Naive thymus-derived CD4-positive, alpha-beta T cell (primary cell): ENCODE measurements at regions of chr1 and their contacts with region 1.

Region 1: GRCh38 chr1:84573967-84574842 is at the start of gene CTBS:
- DNase-seq: peak; percentile 69 to 84 (median 82)
- ATAC-seq: peak; percentile 96
- H3K4me3 ChIP-seq: peak within 1 kb of the TSS; percentile 77
- H3K4me3 Mint-ChIP-seq: peak within 1 kb of the TSS; percentile 97 to 99 (median 99)
- H3K27ac ChIP-seq: peak within 1 kb of the TSS; percentile 99
- H3K27ac Mint-ChIP-seq: peak within 1 kb of the TSS; percentile 98 to 100 (median 100)
- H3K4me1 ChIP-seq: peaks cover 9 to 13% of the 10 kb centered on the region in 2 donors
- H3K4me1 Mint-ChIP-seq: peaks cover 29 to 51% (median 40%) of the 10 kb centered on the region in 7 donors
- H3K27me3 ChIP-seq: no peaks in the 10 kb centered on the region
- H3K27me3 Mint-ChIP-seq: peaks cover 0 to 2% (median 0%) of the 10 kb centered on the region in 5 donors
- total RNA-seq, gene CTBS: 17.4 to 22.3 (median 19.0) TPM

Region 2: GRCh38 chr1:84077476-84078107 is 496.6 kb before region 1 on chr1:
- CTCF ChIA-PET with region 1: no interaction called
- POLR2A ChIA-PET with region 1: no interaction called
- intact Hi-C with region 1: loop called in 1 of 2 experiments (anchors 5 kb)
- DNase-seq: peak; percentile 64 to 79 (median 72)
- ATAC-seq: peak; percentile 97
- H3K4me3 ChIP-seq: peak overlapping the region; percentile 79
- H3K4me3 Mint-ChIP-seq: peak overlapping the region; percentile 84 to 93 (median 90)
- H3K27ac ChIP-seq: peak overlapping the region; percentile 66
- H3K27ac Mint-ChIP-seq: peak overlapping the region; percentile 23 to 87 (median 75)
- H3K4me1 ChIP-seq: peaks cover 9 to 10% of the 10 kb centered on the region in 2 donors
- H3K4me1 Mint-ChIP-seq: peaks cover 6 to 23% (median 14%) of the 10 kb centered on the region in 7 donors
- H3K27me3 ChIP-seq: no peaks in the 10 kb centered on the region
- H3K27me3 Mint-ChIP-seq: peaks cover 0 to 35% (median 0%) of the 10 kb centered on the region in 5 donors

Region 3: DNA sequence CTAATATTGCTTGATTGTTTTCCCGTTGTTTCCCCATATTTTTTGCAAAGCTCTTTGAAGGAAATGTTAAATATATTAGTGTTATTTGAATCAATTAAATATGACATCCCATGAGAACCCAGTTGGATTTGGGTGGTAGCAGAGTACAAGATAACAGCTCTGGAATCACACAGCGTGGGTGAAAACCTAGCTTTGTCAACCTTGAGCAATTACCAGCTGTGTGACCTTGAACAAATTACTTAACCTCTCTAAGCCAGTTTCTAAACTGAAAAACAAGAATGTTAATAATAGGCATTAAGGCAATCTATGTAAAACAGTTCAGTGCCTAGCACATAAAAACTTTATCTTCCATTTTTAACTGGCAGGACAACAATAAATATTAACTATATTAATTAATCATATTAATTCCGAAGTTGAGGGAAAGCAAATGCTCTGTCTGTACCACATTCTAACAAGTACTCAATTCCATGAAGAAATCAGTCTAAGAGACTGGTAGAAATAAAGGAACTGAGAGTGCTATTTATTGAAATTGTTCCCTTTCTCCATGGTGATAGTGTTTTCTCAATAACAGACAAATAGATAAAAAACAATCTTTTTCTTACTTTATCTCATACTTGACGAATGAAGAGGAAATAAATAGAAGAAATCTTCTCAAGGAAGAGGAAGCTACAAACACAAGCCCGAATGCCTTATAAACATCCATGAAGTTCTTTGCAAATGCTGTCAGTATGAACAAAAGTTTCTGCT is 148.9 kb before region 1 on chr1:
- CTCF ChIA-PET with region 1: no interaction called
- POLR2A ChIA-PET with region 1: no interaction called
- intact Hi-C with region 1: no loop called
- DNase-seq: no peak
- ATAC-seq: no peak
- H3K4me3 ChIP-seq: no peak overlapping the region
- H3K4me3 Mint-ChIP-seq: no peak overlapping the region
- H3K27ac ChIP-seq: no peak overlapping the region
- H3K27ac Mint-ChIP-seq: no peak overlapping the region
- H3K4me1 ChIP-seq: no peaks in the 10 kb centered on the region
- H3K4me1 Mint-ChIP-seq: peaks cover 0 to 3% (median 0%) of the 10 kb centered on the region in 7 donors
- H3K27me3 ChIP-seq: no peaks in the 10 kb centered on the region
- H3K27me3 Mint-ChIP-seq: peaks cover 0 to 4% (median 3%) of the 10 kb centered on the region in 5 donors

Region 4: GRCh38 chr1:84442256-84442655 is 131.9 kb before region 1 on chr1:
- CTCF ChIA-PET with region 1: interaction called, 4 read pairs
- POLR2A ChIA-PET with region 1: interaction called, 11 read pairs
- intact Hi-C with region 1: loop called (anchors 1 to 2 kb)
- DNase-seq: peak in 7 of 9 donors; percentile 51 to 77 (median 66)
- ATAC-seq: peak; percentile 99
- H3K4me3 ChIP-seq: no peak overlapping the region
- H3K4me3 Mint-ChIP-seq: peak overlapping the region; percentile 14 to 66 (median 41)
- H3K27ac ChIP-seq: no peak overlapping the region
- H3K27ac Mint-ChIP-seq: peak overlapping the region in 5 of 9 donors; percentile 35 to 81 (median 72)
- H3K4me1 ChIP-seq: peaks cover 10 to 21% of the 10 kb centered on the region in 2 donors
- H3K4me1 Mint-ChIP-seq: peaks cover 5 to 24% (median 16%) of the 10 kb centered on the region in 7 donors
- H3K27me3 ChIP-seq: no peaks in the 10 kb centered on the region
- H3K27me3 Mint-ChIP-seq: peaks cover 0 to 16% (median 11%) of the 10 kb centered on the region in 5 donors

Region 5: GRCh38 chr1:84541679-84542078 is 32.5 kb before region 1 on chr1:
- CTCF ChIA-PET with region 1: no interaction called
- POLR2A ChIA-PET with region 1: interaction called, 3 read pairs
- intact Hi-C with region 1: loop called in 1 of 2 experiments (anchors 5 kb)
- DNase-seq: peak in 2 of 9 donors; percentile 2 to 9
- ATAC-seq: no peak
- H3K4me3 ChIP-seq: no peak overlapping the region
- H3K4me3 Mint-ChIP-seq: no peak overlapping the region
- H3K27ac ChIP-seq: no peak overlapping the region
- H3K27ac Mint-ChIP-seq: peak overlapping the region in 1 of 9 donors; percentile 6
- H3K4me1 ChIP-seq: no peaks in the 10 kb centered on the region
- H3K4me1 Mint-ChIP-seq: peaks cover 0 to 26% (median 0%) of the 10 kb centered on the region in 7 donors
- H3K27me3 ChIP-seq: no peaks in the 10 kb centered on the region
- H3K27me3 Mint-ChIP-seq: no peaks in the 10 kb centered on the region

Region 6: DNA sequence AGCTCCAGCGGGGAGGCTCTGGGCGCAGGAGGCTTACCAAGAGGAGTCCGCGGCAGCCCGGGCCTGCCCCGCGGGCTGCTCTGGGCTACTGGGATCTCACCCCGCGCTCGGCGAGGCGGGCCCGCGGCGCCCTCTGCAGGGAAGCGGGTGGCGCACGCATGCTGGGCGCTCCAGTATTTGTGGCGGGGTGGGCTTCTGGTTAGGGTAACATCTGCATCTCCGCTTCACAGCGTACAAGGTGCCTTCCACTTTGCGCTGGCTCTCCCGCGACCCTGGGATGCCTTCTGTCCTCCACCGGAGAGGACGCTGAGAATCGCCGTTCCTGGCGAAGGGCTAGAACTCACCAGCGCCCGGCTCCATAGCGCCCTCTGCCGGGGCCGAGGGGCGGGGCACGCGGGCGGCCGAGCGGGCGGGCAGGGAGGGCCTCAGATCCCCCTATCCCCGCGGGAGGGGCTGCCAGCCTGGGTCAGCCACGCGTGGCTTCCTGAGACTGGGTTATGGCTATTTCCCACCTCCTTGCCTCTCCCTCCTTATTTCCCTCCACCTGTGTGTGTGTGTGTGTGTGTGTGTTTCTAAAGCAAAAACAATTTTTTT is 46.6 kb after region 1 on chr1:
- CTCF ChIA-PET with region 1: interaction called, 4 read pairs
- POLR2A ChIA-PET with region 1: interaction called, 4 read pairs
- intact Hi-C with region 1: loop called (anchors 1 kb)
- DNase-seq: peak; percentile 60 to 95 (median 84)
- ATAC-seq: peak; percentile 96
- H3K4me3 ChIP-seq: peak overlapping the region; percentile 85
- H3K4me3 Mint-ChIP-seq: peak overlapping the region; percentile 85 to 97 (median 92)
- H3K27ac ChIP-seq: peak overlapping the region; percentile 68
- H3K27ac Mint-ChIP-seq: peak overlapping the region in 6 of 9 donors; percentile 53 to 89 (median 82)
- H3K4me1 ChIP-seq: peaks cover 0 to 3% of the 10 kb centered on the region in 2 donors
- H3K4me1 Mint-ChIP-seq: peaks cover 0 to 18% (median 5%) of the 10 kb centered on the region in 7 donors
- H3K27me3 ChIP-seq: no peaks in the 10 kb centered on the region
- H3K27me3 Mint-ChIP-seq: peaks cover 0 to 7% (median 0%) of the 10 kb centered on the region in 5 donors

Region 7: GRCh38 chr1:84936116-84936810 is 362.1 kb after region 1 on chr1:
- CTCF ChIA-PET with region 1: no interaction called
- POLR2A ChIA-PET with region 1: no interaction called
- intact Hi-C with region 1: loop called in 1 of 2 experiments (anchors 5 kb)
- DNase-seq: peak in 7 of 9 donors; percentile 38 to 66 (median 57)
- ATAC-seq: peak; percentile 91
- H3K4me3 ChIP-seq: no peak overlapping the region
- H3K4me3 Mint-ChIP-seq: peak overlapping the region in 2 of 10 donors; percentile 5 to 51
- H3K27ac ChIP-seq: no peak overlapping the region
- H3K27ac Mint-ChIP-seq: peak overlapping the region in 1 of 9 donors; percentile 27
- H3K4me1 ChIP-seq: no peaks in the 10 kb centered on the region
- H3K4me1 Mint-ChIP-seq: peaks cover 0 to 5% (median 0%) of the 10 kb centered on the region in 7 donors
- H3K27me3 ChIP-seq: no peaks in the 10 kb centered on the region
- H3K27me3 Mint-ChIP-seq: no peaks in the 10 kb centered on the region